ENCODE measurements at regions of chr19 and their contacts with region 1.

Region 1: GRCh38 chr19:13093407-13094105 is 9.1 kb downstream of the LYL1 start:
- DNase-seq: peak; percentile 71
- H3K4me3 Mint-ChIP-seq: no peak overlapping the region
- H3K27ac Mint-ChIP-seq: no peak overlapping the region
- H3K4me1 Mint-ChIP-seq: no peaks in the 10 kb centered on the region
- H3K27me3 Mint-ChIP-seq: no peaks in the 10 kb centered on the region
- CTCF ChIP-seq: peak; percentile 83

Region 2: GRCh38 chr19:12965017-12965811 is 128.3 kb before region 1 on chr19:
- CTCF ChIA-PET with region 1: interaction called, 17 read pairs
- intact Hi-C with region 1: no loop called
- DNase-seq: peak; percentile 87
- H3K4me3 Mint-ChIP-seq: peak overlapping the region; percentile 66
- H3K27ac Mint-ChIP-seq: peak overlapping the region; percentile 53
- H3K4me1 Mint-ChIP-seq: peaks cover 9% of the 10 kb centered on the region
- H3K27me3 Mint-ChIP-seq: peaks cover 8% of the 10 kb centered on the region
- CTCF ChIP-seq: peak; percentile 81

Region 3: DNA sequence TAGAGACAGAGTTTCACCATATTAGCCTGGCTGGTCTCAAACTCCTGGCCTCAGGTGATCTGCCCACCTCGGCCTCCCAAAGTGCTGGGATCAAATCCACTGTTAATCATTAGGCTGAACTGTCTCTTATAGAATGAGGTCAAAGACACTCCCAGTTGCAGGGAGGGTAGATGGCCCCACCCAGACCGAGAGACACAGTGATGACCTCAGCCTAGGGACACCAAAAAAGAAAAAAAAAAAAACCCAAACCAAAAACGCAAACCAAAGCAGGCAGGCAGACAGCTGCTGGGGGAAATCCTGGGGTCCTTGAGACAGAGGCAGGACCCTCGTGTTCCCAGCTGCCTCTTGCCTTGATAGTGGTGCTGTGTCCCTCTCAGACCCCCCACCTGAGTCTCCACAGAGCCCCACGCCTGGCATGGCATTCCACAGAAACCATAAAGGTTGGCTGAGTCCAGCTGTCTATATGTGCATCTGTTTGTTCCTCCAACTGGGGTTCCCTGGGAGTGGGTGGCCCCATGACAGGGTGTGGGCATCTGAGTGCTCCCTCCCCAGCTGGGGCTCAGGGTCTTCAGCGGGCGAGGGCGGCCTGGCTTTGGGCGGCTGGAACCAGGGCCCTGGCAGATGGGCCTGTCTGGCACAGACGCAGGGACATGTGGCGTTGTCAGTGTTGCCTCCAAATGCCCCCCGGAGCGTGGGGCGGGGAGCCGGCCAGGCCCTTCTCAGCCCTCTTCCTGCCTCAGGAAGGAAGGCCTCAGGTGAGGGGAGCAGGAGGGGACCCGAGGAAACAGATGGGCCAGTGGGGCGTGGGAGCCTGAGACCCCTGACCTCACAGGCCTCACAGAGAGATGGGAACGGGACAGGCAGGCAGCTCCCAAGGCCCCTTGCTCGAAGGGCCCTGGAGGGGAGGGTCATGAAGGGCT is 119.0 kb before region 1 on chr19:
- CTCF ChIA-PET with region 1: interaction called, 35 read pairs
- intact Hi-C with region 1: loop called (anchors 5 kb)
- DNase-seq: no peak
- H3K4me3 Mint-ChIP-seq: no peak overlapping the region
- H3K27ac Mint-ChIP-seq: no peak overlapping the region
- H3K4me1 Mint-ChIP-seq: no peaks in the 10 kb centered on the region
- H3K27me3 Mint-ChIP-seq: no peaks in the 10 kb centered on the region
- CTCF ChIP-seq: no peak

Region 4: GRCh38 chr19:12985049-12985776 is 108.3 kb before region 1 on chr19:
- CTCF ChIA-PET with region 1: interaction called, 10 read pairs
- intact Hi-C with region 1: no loop called
- DNase-seq: peak; percentile 82
- H3K4me3 Mint-ChIP-seq: peak overlapping the region; percentile 28
- H3K27ac Mint-ChIP-seq: peak overlapping the region; percentile 11
- H3K4me1 Mint-ChIP-seq: no peaks in the 10 kb centered on the region
- H3K27me3 Mint-ChIP-seq: no peaks in the 10 kb centered on the region
- CTCF ChIP-seq: no peak

Region 5: GRCh38 chr19:13028027-13028426 is 65.5 kb before region 1 on chr19:
- CTCF ChIA-PET with region 1: no interaction called
- intact Hi-C with region 1: no loop called
- DNase-seq: no peak
- H3K4me3 Mint-ChIP-seq: no peak overlapping the region
- H3K27ac Mint-ChIP-seq: no peak overlapping the region
- H3K4me1 Mint-ChIP-seq: peaks cover 33% of the 10 kb centered on the region
- H3K27me3 Mint-ChIP-seq: no peaks in the 10 kb centered on the region
- CTCF ChIP-seq: no peak

Region 6: DNA sequence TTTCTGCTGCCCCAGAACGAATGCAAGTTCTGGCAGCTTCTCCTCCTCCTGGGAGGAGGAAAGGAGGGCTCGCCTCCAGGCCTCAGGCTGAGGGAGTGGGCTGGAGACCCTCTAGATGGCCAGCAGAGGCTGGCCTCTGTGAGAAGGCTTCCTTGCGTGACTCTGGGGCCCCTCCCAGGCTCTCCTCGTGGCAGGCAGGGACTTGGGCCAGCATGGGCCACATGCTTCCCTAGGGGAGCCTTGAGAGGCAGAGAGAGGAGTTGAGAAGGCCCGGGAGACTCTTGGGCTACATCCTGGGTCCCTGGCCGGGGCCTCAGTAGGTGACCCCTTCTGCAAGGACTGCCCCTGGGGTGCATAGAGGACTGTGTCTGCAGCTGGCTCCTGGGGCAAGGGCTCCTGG is 16.8 kb before region 1 on chr19:
- CTCF ChIA-PET with region 1: no interaction called
- intact Hi-C with region 1: no loop called
- DNase-seq: no peak
- H3K4me3 Mint-ChIP-seq: no peak overlapping the region
- H3K27ac Mint-ChIP-seq: no peak overlapping the region
- H3K4me1 Mint-ChIP-seq: peaks cover 11% of the 10 kb centered on the region
- H3K27me3 Mint-ChIP-seq: no peaks in the 10 kb centered on the region
- CTCF ChIP-seq: no peak

Region 7: GRCh38 chr19:13134626-13135025 is 41.1 kb after region 1 on chr19:
- CTCF ChIA-PET with region 1: no interaction called
- intact Hi-C with region 1: no loop called
- DNase-seq: no peak
- H3K4me3 Mint-ChIP-seq: no peak overlapping the region
- H3K27ac Mint-ChIP-seq: no peak overlapping the region
- H3K4me1 Mint-ChIP-seq: no peaks in the 10 kb centered on the region
- H3K27me3 Mint-ChIP-seq: no peaks in the 10 kb centered on the region
- CTCF ChIP-seq: no peak

Measured in Calu3 (cell line).